MCF 10A (cell line): ENCODE measurements at regions of chr12 and their contacts with region 1.

Region 1: DNA sequence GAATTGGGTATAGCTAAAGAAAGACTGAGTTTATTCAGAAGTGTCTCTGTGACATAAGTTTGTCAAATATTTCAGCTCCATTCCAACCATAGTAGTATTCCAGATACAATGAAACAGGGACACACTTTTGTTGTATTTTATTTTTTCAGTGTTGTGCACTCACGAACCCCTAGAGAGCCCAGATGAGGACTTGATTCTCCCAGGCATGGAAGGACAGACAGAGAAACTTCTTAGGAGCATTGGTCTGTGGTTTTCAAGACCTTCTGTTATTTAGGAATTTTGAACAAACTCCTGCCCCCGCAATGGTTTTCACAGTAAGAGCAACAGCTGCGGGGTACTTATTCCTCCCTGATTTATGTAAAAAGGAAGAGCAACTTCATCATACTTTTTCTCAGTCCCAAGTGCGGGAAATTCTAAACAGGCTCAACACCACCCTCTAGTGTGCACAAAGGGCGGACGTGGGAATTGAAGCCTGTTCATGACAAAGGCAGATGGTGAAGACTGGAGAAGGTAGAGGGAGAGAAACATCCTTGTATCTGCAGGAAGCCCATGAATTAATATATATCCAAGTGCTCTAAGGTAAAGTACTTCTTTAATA is 147.6 kb downstream of the PAH start:
- DNase-seq: peak; percentile 71
- H3K4me3 Mint-ChIP-seq: no peak overlapping the region
- H3K27ac Mint-ChIP-seq: no peak overlapping the region
- H3K4me1 Mint-ChIP-seq: no peaks in the 10 kb centered on the region
- H3K27me3 Mint-ChIP-seq: no peaks in the 10 kb centered on the region
- CTCF ChIP-seq: peak; percentile 54

Region 2: DNA sequence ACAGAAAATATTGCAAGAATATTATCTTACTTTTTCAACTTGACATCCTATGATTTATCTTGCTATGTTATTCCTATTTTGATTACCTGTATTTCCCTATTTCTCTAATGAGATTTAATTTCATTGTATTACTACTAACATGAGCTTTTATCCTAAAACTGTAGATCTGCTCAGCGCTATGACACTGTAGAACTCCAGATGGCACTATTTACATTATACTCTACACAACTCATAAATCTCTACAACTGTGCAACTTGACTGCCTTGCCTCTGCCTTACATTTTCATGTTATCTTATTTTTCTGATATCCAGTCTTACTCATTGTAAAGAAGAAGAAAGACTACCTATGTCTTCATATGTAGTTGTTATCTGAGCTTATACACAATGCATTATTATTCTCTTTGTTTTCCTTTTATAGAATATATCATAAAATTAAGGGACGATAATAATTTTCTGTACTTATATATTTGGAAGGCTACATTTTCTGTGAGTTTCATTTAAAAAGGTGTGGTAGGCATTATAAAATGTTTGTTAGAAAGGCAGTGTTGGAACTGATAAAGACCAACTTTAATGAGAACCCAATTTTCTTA is 673.6 kb before region 1 on chr12:
- CTCF ChIA-PET with region 1: interaction called, 5 read pairs
- POLR2A ChIA-PET with region 1: no interaction called
- intact Hi-C with region 1: loop called (anchors 2 kb)
- DNase-seq: peak; percentile 23
- H3K4me3 Mint-ChIP-seq: no peak overlapping the region
- H3K27ac Mint-ChIP-seq: no peak overlapping the region
- H3K4me1 Mint-ChIP-seq: peaks cover 7% of the 10 kb centered on the region
- H3K27me3 Mint-ChIP-seq: no peaks in the 10 kb centered on the region
- CTCF ChIP-seq: peak; percentile 39

Region 3: DNA sequence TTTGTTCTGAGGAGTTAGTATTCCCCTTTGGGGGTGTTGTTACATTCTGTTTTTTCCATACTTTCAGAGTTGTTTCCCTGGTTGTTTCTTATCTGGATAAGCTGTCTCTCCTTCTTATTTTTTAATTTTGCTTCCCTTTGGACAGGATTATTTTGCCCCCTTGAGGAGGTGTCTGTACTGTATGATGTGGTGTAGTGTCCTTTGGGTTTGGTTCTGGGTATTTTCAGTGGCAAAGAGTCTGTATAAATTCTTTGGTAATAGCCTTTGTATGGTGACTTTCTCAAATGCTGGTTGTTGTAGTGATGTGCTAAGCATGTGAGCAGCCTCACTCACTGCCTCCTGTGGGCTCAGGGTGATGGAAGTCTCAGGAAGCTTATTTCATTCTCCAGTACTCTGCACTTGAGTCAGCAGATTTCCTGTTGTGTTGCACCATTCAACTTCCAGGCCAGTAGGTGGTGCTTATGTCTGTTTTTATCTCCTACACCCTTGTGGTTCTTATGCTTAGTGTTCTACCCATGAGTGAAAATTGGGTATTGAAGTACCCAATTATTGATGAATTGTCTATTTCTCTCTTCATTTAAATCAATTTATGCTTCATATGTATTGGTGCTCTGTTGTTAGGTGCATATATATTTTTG is 468.5 kb before region 1 on chr12:
- CTCF ChIA-PET with region 1: no interaction called
- POLR2A ChIA-PET with region 1: no interaction called
- intact Hi-C with region 1: loop called (anchors 10 kb)
- DNase-seq: peak; percentile 63
- H3K4me3 Mint-ChIP-seq: no peak overlapping the region
- H3K27ac Mint-ChIP-seq: no peak overlapping the region
- H3K4me1 Mint-ChIP-seq: peaks cover 9% of the 10 kb centered on the region
- H3K27me3 Mint-ChIP-seq: no peaks in the 10 kb centered on the region
- CTCF ChIP-seq: peak; percentile 12

Region 4: GRCh38 chr12:102421801-102422583 is 347.4 kb before region 1 on chr12:
- CTCF ChIA-PET with region 1: no interaction called
- POLR2A ChIA-PET with region 1: no interaction called
- intact Hi-C with region 1: no loop called
- DNase-seq: no peak
- H3K4me3 Mint-ChIP-seq: no peak overlapping the region
- H3K27ac Mint-ChIP-seq: no peak overlapping the region
- H3K4me1 Mint-ChIP-seq: no peaks in the 10 kb centered on the region
- H3K27me3 Mint-ChIP-seq: no peaks in the 10 kb centered on the region
- CTCF ChIP-seq: no peak

Region 5: GRCh38 chr12:102465762-102466560 is 303.5 kb before region 1 on chr12:
- CTCF ChIA-PET with region 1: no interaction called
- POLR2A ChIA-PET with region 1: no interaction called
- intact Hi-C with region 1: no loop called
- DNase-seq: no peak
- H3K4me3 Mint-ChIP-seq: no peak overlapping the region
- H3K27ac Mint-ChIP-seq: no peak overlapping the region
- H3K4me1 Mint-ChIP-seq: peaks cover 25% of the 10 kb centered on the region
- H3K27me3 Mint-ChIP-seq: no peaks in the 10 kb centered on the region
- CTCF ChIP-seq: no peak

Region 6: DNA sequence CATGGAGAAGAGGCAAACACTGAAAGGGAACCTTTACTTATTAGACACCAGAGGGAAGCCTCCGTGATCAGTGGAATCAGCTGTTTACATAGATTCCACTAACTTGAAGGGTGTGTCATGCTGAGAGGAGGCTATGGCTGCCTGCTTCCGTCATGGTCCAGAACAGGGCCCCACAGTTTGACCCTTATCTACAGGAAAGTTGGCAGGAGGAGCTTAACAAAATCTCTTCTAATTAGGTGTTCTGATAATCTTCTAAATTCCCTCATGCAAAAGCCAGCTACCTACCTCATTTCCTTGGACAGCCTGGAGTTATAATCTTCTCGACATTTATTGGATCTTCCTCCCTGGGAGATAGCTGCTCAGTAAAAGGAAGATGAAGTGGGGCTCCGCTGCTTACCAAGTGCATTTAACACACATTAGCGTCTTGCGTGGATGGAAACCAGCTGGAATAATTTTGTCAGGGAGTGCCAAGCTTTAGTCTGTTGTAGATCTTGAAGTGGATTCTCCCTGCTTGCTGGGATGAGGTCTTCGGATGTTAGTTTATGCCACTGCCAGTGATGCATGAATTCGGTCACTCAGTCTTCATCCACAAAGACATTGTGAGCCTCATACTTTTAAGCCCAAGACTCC is 23.3 kb before region 1 on chr12:
- CTCF ChIA-PET with region 1: interaction called, 11 read pairs
- POLR2A ChIA-PET with region 1: no interaction called
- intact Hi-C with region 1: no loop called
- DNase-seq: no peak
- H3K4me3 Mint-ChIP-seq: no peak overlapping the region
- H3K27ac Mint-ChIP-seq: no peak overlapping the region
- H3K4me1 Mint-ChIP-seq: no peaks in the 10 kb centered on the region
- H3K27me3 Mint-ChIP-seq: no peaks in the 10 kb centered on the region
- CTCF ChIP-seq: no peak

Region 7: DNA sequence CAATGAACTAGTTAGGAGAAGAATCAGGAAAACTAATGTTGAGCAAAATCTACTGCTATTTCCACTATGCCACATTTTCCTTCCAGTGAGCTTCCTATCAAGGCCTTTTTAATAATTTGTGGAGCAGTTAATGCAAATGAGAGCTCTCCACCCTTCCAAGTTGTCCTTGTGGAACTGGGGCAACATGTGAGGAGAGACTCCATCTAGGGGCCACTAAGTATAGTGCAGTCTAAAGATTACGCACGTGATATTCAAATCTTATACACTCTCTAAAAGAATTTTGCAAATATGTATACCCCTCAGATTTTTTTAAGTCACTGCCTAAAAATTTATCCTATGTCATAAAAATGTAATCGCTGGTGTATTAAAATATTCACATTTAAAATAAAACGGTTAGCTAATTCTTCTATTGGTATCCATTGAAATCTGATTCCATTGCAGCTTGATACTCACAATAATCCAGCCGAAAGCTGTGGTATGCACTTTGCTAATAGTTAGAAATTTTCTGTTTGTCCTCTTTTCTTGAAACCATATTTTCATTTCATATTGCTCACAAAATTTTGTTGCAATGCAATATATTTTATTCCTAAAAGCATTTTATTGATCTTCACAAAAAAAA is 47.5 kb after region 1 on chr12:
- CTCF ChIA-PET with region 1: interaction called, 10 read pairs
- POLR2A ChIA-PET with region 1: no interaction called
- intact Hi-C with region 1: no loop called
- DNase-seq: peak; percentile 48
- H3K4me3 Mint-ChIP-seq: no peak overlapping the region
- H3K27ac Mint-ChIP-seq: no peak overlapping the region
- H3K4me1 Mint-ChIP-seq: peaks cover 9% of the 10 kb centered on the region
- H3K27me3 Mint-ChIP-seq: peaks cover 26% of the 10 kb centered on the region
- CTCF ChIP-seq: peak; percentile 58